A673 (cell line): ENCODE measurements at regions of chr10 and their contacts with region 1.

Region 1: DNA sequence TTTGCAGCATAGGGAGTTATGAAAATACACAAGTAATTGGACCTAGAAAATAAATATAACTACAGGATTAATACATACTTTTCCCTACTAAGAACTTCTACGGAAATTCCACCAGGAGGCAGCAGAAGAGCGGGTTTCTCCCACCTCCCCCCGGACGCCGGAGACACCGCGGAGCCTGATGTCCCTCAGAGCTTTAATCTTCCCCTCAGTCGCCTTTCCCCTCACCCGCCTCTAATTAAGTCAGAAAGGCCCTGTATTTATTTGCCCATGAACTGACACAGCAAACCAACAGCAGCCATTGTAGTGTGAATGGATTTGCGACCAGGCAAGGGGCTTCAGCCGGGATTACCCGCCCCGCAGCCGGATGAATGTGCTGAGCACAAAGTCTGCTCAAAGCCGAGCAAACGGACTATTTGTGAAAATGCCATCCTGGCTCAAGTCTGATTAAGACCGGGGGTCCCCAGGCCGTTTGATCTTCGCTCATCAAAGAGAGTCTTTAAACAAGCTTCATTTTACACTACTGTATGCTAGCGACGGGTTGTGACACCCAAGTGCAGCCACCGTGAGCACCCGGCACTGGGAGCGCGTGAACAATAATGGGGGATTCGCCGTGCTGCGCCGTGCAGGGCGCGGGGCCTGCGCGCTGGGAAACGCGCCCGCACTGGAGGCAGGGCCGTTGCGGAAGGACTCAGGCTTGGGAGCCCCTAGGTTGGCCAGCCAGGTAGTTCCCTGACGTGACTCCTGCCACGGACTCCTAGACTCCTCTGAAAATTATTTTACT is 5.6 kb upstream of the DKK1 start:
- DNase-seq: peak; percentile 84
- H3K4me3 ChIP-seq: peak overlapping the region; percentile 43
- H3K27ac ChIP-seq: no peak overlapping the region
- H3K4me1 ChIP-seq: peaks cover 3% of the 10 kb centered on the region
- H3K27me3 ChIP-seq: peaks cover 43% of the 10 kb centered on the region
- CTCF ChIP-seq: peak; percentile 76

Region 2: GRCh38 chr10:51896849-51897248 is 411.6 kb before region 1 on chr10:
- CTCF ChIA-PET with region 1: no interaction called
- POLR2A ChIA-PET with region 1: no interaction called
- intact Hi-C with region 1: no loop called
- DNase-seq: no peak
- H3K4me3 ChIP-seq: no peak overlapping the region
- H3K27ac ChIP-seq: no peak overlapping the region
- H3K4me1 ChIP-seq: no peaks in the 10 kb centered on the region
- H3K27me3 ChIP-seq: no peaks in the 10 kb centered on the region
- CTCF ChIP-seq: no peak

Region 3: DNA sequence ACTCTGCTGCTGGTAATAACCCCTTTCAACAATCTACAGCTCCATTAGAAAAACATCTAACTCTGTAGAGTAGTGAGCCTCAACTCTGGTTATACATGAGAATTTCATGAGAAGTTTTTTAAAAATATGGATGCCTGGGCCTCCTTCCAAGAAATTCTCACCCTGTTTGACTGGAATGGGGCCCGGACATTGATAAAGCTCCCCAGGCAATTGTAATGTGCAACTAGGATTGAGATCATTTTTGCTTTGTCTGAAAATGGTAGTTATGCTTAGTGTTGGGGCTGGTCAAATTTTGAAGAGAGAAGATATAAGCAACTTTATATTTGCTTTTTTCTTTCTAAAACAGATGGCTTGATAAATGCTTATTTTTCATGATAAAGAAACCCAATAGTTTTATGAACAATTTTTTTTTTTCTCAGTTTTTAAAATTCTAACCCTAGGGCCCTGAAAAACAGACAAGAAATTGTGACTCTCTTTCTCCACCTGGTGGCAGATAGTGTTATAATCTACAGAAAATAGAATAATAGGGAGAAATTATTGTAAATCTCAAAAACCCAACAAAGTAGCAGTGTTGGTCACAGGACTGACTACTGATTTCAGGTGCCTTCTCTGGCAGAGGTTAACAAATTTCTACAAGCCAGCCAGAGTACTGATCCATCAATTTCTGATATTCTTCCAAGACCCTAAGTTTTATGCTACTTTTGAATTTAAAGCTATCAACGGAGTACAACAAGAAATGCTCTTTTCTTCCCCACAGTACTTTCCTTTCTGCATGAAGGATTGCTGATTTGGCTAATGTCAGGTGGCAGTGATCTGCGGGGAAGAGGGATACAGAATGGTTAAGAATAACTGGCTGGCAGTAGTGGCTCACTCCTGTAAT is 180.4 kb after region 1 on chr10:
- CTCF ChIA-PET with region 1: interaction called, 8 read pairs
- POLR2A ChIA-PET with region 1: interaction called, 5 read pairs
- intact Hi-C with region 1: loop called (anchors 1 kb)
- DNase-seq: peak; percentile 58
- H3K4me3 ChIP-seq: no peak overlapping the region
- H3K27ac ChIP-seq: no peak overlapping the region
- H3K4me1 ChIP-seq: no peaks in the 10 kb centered on the region
- H3K27me3 ChIP-seq: peaks cover 3% of the 10 kb centered on the region
- CTCF ChIP-seq: peak; percentile 63

Region 4: DNA sequence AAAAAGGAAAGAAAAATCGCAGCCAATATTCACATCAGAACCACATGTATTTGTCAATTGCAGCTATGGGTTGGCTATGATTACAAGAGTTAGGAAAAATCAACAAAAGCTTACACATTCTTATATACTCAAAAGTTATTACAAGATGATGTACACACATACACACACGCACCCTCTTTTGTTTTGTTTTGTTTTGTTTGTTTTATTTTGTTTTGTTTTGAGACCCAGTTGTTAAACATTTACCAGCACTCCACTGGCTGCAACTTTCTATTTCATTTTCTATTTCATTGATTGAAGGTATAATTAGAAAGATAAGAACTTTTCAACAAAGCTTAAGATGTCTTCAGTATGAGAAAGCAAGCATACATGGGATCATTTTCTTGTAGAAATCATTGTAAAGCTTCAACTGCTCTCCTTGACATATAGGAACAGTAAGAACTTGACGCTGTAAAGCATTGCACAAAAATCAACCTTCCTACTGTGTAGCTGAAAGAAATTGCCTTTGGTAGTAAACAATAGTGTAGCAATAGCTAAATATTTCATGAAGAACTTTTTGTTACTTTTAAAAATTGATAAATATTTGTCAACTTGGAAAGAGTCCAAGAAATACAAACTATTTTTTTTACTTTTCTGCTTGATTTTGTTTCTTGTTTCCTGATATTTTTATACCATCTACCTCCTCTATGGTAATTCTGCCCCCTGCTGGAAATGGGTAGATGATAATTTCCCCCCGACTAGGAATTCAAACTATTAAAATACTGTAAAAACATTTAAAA is 258.2 kb after region 1 on chr10:
- CTCF ChIA-PET with region 1: interaction called, 5 read pairs
- POLR2A ChIA-PET with region 1: no interaction called
- intact Hi-C with region 1: loop called (anchors 2 kb)
- DNase-seq: peak; percentile 58
- H3K4me3 ChIP-seq: no peak overlapping the region
- H3K27ac ChIP-seq: no peak overlapping the region
- H3K4me1 ChIP-seq: no peaks in the 10 kb centered on the region
- H3K27me3 ChIP-seq: no peaks in the 10 kb centered on the region
- CTCF ChIP-seq: peak; percentile 68

Region 5: DNA sequence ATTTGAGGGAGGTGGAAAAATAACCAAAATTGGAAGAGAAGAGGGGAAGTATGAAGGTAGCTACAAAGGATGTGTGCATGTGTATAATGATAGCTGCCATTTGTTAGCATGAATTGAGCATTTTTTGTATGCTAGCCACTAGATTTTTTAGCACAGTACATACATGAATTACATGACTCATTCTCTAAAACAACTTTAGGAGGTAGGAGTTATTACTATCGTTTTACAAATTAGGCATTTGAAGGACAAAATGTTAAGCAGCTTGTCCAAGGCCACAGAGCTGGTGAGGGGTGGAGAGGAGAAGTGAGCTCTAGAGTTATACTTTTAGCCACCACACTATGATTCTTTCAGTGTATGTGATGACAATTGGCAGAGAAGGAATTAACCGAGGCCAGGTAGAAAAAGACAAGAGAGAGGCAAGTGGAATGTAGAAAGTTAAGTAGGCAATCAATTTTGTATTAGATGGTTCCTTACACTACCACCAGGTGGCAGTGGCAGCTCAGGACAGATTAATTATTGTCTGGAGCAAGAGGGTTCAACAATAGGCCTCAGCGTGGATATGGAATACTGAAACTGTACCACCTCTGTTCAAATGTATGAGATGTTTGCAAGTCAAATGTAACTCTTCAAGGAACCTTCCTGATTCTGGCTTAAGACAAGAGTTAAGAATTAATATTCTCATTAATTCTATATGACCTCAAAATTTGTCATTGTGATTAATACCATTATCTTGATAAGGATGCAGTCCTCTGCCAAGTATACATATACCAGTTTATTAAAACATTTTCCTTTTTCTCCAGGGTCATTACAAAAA is 336.1 kb after region 1 on chr10:
- CTCF ChIA-PET with region 1: no interaction called
- POLR2A ChIA-PET with region 1: no interaction called
- intact Hi-C with region 1: loop called (anchors 2 kb)
- DNase-seq: peak; percentile 76
- H3K4me3 ChIP-seq: no peak overlapping the region
- H3K27ac ChIP-seq: no peak overlapping the region
- H3K4me1 ChIP-seq: no peaks in the 10 kb centered on the region
- H3K27me3 ChIP-seq: no peaks in the 10 kb centered on the region
- CTCF ChIP-seq: peak; percentile 72

Region 6: DNA sequence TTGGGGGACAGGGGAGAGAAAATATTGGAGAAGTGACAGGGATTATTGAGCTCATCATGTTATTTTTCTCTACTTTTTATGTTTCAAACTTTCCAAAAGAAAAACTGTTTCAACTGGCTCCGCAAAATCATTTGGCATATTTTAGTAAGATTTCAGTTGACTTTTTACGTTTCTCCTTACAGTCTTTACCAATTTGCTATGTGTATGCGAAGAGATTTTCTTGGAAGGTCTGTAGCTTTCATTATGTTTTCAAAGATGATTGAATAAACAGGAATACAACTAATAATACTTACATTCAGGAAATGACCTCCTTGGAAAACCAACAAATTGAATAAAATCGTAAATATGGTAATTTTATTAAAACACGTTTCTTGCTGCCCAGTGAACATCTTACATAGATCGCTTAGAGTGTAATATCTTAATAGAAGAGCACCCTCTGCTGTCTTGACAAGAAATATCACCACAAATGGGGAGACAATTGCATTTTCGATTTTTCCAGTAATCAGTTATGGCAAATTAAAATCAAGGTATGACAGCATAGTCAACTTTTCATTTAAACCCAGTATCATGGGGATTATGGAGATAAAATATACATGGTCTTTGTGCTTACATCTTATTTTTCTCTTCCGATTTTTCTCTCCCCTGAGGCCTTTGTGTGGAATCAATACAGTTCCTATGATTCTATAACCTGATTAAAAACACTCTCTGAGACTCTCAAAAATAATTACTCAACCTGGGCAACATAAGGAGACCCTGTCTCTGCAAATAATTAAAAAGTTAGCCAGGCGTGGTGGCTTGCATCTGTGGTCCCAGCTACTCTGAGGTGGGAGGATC is 421.0 kb after region 1 on chr10:
- CTCF ChIA-PET with region 1: no interaction called
- POLR2A ChIA-PET with region 1: no interaction called
- intact Hi-C with region 1: loop called (anchors 1 kb)
- DNase-seq: peak; percentile 54
- H3K4me3 ChIP-seq: peak overlapping the region; percentile 22
- H3K27ac ChIP-seq: no peak overlapping the region
- H3K4me1 ChIP-seq: no peaks in the 10 kb centered on the region
- H3K27me3 ChIP-seq: no peaks in the 10 kb centered on the region
- CTCF ChIP-seq: peak; percentile 68

Region 7: DNA sequence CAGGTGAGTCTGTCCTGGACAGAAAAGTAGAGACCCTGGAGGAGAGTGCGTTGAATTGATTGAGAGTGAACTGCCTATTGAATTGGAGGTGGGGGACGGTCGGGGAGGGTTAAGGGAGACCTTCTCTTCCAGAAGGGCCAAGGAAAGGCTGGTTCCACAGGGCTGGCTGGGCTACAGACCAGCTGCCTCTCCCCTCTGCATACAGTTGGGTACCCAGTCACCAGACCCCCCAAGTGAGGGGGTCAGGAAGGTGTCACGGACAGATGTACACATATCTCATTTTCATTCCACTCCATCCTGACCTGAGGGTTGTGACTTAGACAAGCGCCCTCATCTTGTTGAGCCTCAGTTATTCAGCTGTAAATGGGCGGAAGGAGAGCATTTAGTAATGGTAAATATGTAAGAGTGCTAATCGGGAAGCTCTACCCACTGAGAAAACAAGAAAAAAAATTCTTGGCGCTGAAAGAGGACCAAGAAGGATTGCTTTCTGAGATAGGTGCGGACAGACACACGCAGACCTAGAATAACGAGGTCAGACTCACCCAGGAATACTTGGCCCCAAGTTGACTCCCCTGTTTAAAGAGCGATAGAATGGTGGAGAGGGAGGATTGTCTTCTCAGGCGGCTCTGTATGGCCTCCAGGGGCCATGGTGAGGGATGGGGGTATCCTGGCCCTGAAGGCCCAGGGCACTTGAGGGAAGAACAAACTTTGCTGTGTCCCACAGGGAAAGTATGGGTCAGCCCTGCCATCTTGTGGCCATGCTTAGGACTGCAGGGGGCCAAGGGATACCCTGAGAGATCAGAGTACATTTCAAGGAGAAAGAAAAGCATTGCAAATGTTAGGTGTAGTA is 471.3 kb after region 1 on chr10:
- CTCF ChIA-PET with region 1: no interaction called
- POLR2A ChIA-PET with region 1: no interaction called
- intact Hi-C with region 1: loop called (anchors 2 kb)
- DNase-seq: peak; percentile 70
- H3K4me3 ChIP-seq: no peak overlapping the region
- H3K27ac ChIP-seq: no peak overlapping the region
- H3K4me1 ChIP-seq: no peaks in the 10 kb centered on the region
- H3K27me3 ChIP-seq: no peaks in the 10 kb centered on the region
- CTCF ChIP-seq: peak; percentile 86